OCI-LY7 (cell line): ENCODE measurements at regions of chr2 and their contacts with region 1.

Region 1: DNA sequence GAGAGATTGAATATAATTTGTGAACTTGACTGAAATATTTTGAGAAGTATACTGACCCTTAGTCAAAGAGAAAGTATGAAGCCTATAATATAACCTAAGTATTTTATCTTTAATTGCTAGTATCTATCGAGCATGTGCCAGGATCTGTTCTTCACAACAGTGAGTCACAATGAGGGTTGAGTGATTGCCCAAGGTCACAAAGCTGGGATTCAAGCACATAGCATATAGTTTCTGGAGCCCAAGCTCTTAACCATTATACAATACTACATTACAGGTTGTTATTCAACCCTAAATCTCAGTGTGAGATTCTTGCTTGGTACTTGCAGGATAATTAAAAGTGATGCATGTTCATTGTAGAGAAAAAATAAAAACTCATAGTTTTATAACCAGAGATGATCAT is 97.2 kb downstream of the RAB3GAP1 start:
- DNase-seq: no peak
- H3K4me3 ChIP-seq: no peak overlapping the region
- H3K27ac ChIP-seq: no peak overlapping the region
- H3K4me1 ChIP-seq: no peaks in the 10 kb centered on the region
- CTCF ChIP-seq: no peak

Region 2: DNA sequence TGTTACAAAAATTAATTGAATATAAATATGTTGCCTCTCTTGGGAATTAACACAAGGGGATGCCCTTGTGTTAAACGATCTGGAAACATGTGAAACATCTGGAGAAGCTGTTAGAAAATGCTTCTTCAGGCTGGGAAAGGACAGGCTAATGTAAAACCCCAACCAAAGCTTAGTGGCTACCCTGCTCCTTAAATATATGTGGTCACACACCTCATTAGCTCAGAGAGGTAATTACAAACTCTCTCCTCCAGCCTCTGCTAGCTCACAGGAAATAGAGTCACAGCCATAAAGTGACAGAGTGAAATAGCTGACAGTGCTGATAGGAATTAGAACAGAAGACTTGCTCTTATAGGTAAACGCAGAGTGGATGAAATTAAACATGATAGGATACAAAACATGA is 58.8 kb after region 1 on chr2:
- CTCF ChIA-PET with region 1: no interaction called
- POLR2A ChIA-PET with region 1: interaction called, 13 read pairs
- intact Hi-C with region 1: no loop called
- DNase-seq: no peak
- H3K4me3 ChIP-seq: no peak overlapping the region
- H3K27ac ChIP-seq: no peak overlapping the region
- H3K4me1 ChIP-seq: no peaks in the 10 kb centered on the region
- CTCF ChIP-seq: no peak

Region 3: DNA sequence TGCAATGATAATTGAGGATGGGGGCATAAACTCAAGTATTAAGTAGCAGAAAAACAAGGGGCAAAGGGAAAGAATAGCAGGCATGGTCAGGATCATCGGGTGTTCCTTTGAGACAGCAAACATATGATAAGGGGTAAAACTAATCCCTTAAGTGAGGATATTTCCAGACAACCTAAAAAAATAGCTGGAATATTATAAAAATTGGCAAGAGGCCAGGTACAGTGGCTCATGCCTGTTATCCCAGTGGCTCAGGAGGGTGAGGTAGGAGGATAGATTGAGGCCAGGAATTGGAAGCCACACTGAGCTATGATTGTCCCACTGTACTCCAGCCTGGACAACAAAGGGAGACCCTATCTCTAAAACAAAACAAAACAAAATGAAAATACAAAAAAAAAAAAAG is 242.7 kb after region 1 on chr2:
- CTCF ChIA-PET with region 1: no interaction called
- POLR2A ChIA-PET with region 1: no interaction called
- intact Hi-C with region 1: no loop called
- DNase-seq: no peak
- H3K4me3 ChIP-seq: no peak overlapping the region
- H3K27ac ChIP-seq: no peak overlapping the region
- H3K4me1 ChIP-seq: no peaks in the 10 kb centered on the region
- CTCF ChIP-seq: no peak

Region 4: GRCh38 chr2:135685361-135685760 is 536.1 kb after region 1 on chr2:
- CTCF ChIA-PET with region 1: no interaction called
- POLR2A ChIA-PET with region 1: no interaction called
- intact Hi-C with region 1: no loop called
- DNase-seq: no peak
- H3K4me3 ChIP-seq: no peak overlapping the region
- H3K27ac ChIP-seq: no peak overlapping the region
- H3K4me1 ChIP-seq: no peaks in the 10 kb centered on the region
- CTCF ChIP-seq: no peak